Posterior vena cava (tissue), 2 donors: ENCODE measurements at regions of chrX and their contacts with region 1.

Region 1: DNA sequence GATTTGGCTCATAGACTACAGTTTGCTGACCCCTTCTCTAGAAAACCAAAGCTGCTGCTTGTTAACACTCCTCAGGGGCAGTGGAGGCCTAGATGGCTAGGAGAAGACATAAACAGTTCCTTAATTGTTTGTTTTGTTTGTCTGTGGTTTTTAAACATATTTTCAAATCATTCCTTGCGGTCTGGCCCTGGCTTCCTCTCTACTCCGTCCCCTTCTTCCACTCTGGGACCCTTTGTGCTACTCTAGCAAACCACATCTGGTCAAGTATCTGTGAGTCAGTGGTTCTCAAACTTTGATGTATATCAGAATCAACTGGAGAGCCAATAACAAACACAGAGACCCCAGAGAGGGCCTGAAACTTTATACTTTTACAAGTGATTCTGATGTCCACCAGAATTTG is 36.1 kb downstream of the FRMPD4 start:
- DNase-seq: no peak

Region 2: GRCh38 chrX:12197030-12197429 is 22.7 kb after region 1 on chrX:
- intact Hi-C with region 1: loop called in 1 of 2 experiments (anchors 1 kb)
- DNase-seq: no peak